ENCODE measurements at regions of chrX and their contacts with region 1.

Region 1: DNA sequence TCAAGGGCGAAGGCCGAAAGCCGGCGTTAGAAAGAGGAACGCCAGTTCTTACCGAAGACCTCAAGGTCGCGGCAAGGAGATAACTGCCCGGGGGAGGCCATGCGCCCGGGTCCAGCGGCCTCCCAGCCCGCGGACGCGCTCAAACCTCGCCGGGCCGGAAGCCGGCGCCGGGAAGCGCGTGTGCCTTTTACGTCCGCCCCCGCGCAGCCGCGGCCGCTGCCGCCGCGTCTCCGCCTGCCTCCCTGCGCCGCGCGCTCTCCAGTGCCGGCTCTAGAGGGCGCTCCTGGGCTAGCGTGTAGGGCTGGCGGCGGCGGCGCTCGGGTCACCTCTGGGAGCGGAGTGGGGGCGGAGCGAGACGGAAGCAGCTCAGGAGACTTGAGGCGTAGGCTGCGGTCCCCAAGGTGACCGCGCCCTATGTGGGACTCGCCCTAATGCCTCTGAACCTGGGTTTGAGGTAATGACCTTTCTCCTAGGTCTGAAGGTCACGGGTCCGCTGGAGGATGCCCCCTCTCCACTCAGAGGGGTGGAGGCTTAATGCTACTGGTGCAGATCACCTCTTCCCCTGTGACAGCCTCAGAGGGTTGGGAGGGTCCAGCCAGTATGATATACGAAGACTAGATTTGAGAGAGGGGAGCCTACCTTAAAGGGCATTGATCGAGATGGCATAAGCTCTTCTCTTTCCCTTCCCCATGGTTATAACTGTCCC is 839 bp downstream of the SLC25A5 start:
- DNase-seq: peak; percentile 75
- H3K4me3 Mint-ChIP-seq: peak overlapping the region; percentile 81
- H3K27ac Mint-ChIP-seq: peak overlapping the region; percentile 87
- H3K4me1 Mint-ChIP-seq: no peaks in the 10 kb centered on the region
- H3K27me3 Mint-ChIP-seq: no peaks in the 10 kb centered on the region
- CTCF ChIP-seq: peak; percentile 54

Region 2: DNA sequence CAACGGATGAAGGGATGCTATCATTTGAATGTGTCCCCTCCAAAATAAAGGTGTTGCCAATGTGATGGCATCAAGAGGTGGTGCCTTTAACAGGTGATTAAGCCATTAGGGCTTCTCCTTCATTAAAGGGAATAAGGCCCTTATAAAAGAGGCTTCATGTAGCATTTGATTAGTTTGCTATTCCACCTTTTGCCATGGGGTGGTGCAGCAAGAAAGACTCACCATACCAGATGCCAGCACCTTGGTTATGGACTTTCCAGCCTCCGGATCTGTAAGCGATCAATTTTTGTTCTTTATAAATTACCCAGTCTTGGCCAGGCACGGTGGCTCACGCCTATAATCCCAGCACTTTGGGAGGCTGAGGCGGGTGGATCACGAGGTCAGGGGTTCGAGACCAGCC is 77.8 kb before region 1 on chrX:
- CTCF ChIA-PET with region 1: interaction called, 3 read pairs
- POLR2A ChIA-PET with region 1: no interaction called
- intact Hi-C with region 1: loop called (anchors 1 kb)
- DNase-seq: peak; percentile 59
- H3K4me3 Mint-ChIP-seq: no peak overlapping the region
- H3K27ac Mint-ChIP-seq: no peak overlapping the region
- H3K4me1 Mint-ChIP-seq: no peaks in the 10 kb centered on the region
- H3K27me3 Mint-ChIP-seq: peaks cover 13% of the 10 kb centered on the region
- CTCF ChIP-seq: peak; percentile 7

Measured in MCF 10A (cell line).